Esophagus muscularis mucosa (tissue), 4 donors: ENCODE measurements at regions of chr22 and their contacts with region 1.

Region 1: DNA sequence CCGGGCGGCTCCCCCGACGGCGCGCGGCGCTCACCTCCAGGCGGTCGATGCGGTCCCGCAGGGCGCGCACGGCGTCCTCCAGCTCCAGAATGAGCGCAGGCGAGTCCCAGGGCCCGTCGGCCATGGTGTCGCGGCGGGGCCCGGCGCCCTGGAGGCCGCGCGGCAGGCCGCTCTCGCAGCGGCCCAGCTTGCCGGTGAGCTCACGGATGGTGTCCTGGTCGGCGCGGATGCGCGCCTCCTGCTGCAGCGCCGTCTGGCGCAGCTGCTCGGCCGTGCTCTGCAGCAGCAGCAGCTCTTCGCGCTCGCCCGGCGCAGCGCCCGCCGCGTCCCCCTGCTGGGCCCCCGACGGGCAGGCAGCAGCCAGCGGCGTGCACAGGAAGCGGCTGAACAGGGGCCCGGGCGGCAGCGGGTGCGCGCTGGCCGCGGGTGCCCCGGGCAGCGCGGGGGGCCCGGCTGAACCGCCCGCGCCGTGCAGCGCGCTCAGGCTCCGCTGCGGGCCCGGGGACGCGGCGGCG is 570 bp downstream of the NPTXR start:
- DNase-seq: no peak
- H3K4me3 ChIP-seq: peak overlapping the region; percentile 62 to 73 (median 65)
- H3K27ac ChIP-seq: peak overlapping the region; percentile 81 to 87 (median 82)
- H3K4me1 ChIP-seq: peaks cover 10 to 34% (median 27%) of the 10 kb centered on the region in 4 donors
- H3K27me3 ChIP-seq: no peaks in the 10 kb centered on the region
- CTCF ChIP-seq: peak; percentile 26 to 47 (median 42)
- EP300 ChIP-seq: no peak
- POLR2A ChIP-seq: no peak

Region 2: GRCh38 chr22:38766076-38766777 is 77.0 kb before region 1 on chr22:
- intact Hi-C with region 1: loop called (anchors 5 kb)
- DNase-seq: no peak
- H3K4me3 ChIP-seq: no peak overlapping the region
- H3K27ac ChIP-seq: no peak overlapping the region
- H3K4me1 ChIP-seq: peaks cover 0 to 17% (median 14%) of the 10 kb centered on the region in 4 donors
- H3K27me3 ChIP-seq: peaks cover 0 to 4% (median 0%) of the 10 kb centered on the region in 4 donors
- CTCF ChIP-seq: peak; percentile 45 to 74 (median 53)
- EP300 ChIP-seq: no peak
- POLR2A ChIP-seq: no peak

Region 3: GRCh38 chr22:39013942-39014722 is 170.9 kb after region 1 on chr22 and contains the start of gene APOBEC3C:
- intact Hi-C with region 1: no loop called
- DNase-seq: peak; percentile 98
- H3K4me3 ChIP-seq: peak within 1 kb of the TSS; percentile 52 to 66 (median 62)
- H3K27ac ChIP-seq: peak within 1 kb of the TSS; percentile 79 to 83 (median 83)
- H3K4me1 ChIP-seq: peaks cover 7 to 23% (median 21%) of the 10 kb centered on the region in 4 donors
- H3K27me3 ChIP-seq: no peaks in the 10 kb centered on the region
- CTCF ChIP-seq: peak in 2 of 3 experiments; percentile 2 to 5
- EP300 ChIP-seq: no peak
- POLR2A ChIP-seq: no peak
- total RNA-seq, gene APOBEC3C: 7.1 to 11.3 (median 8.8) TPM